Mammary epithelial cell (primary cell): ENCODE measurements at regions of chr12 and their contacts with region 1.

Region 1: DNA sequence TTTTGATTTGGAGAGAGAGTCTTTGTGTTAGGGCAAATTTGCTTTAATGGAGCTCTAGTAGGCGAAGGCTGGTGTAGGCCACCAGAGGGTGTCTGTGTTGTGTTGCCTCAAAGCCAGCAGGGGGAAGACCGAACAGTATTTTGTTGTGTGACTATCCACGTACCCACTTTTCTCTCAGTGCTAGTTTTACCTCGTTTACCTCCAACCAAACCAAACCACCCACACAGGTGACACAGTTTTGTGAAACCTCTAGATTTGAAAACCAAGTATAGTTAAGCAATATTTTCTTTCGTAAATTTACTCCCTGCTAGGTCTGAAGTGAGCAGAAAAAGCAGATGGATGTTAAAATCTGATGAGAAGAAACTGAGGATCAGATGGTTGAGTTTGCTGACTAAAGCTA is 36.3 kb upstream of the NPFF start:
- DNase-seq: peak; percentile 62
- H3K4me3 ChIP-seq: no peak overlapping the region
- H3K27ac ChIP-seq: no peak overlapping the region
- H3K4me1 ChIP-seq: peaks cover 2% of the 10 kb centered on the region
- H3K27me3 ChIP-seq: no peaks in the 10 kb centered on the region
- CTCF ChIP-seq: peak; percentile 80 to 87

Region 2: DNA sequence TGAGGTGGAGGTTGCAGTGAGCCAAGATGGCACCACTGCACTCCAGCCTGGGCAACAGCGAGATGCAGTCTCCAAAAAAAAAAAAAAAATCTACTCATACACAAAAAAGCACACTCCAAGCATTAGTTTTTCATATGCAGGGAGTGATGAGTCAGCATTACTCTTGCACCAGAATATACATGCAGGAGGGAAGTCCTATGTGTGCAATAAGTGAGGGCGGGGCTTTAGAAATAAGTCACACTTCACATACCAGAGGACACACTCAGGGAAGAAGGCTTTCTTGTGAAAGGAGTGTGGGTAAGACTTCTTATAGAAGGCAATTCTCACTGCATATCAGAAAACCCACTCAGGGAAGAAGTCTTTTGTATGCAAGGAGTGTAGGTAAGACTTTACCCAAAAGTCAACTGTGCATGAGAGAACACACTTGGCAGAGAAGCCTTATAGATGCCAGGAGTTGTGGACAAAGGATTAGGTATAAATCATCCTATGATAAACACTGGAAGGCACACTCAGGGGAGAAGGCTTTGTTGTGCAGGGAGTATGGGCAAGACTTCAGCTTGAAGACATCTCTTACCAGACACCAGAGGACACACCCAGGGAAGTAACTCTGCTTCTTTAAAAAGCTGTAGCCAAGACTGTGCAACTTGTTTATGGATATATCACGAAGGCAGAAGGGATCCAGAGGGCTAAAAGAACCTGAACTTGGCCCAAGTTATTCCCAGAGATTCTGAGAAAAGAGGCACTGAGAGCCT is 32.1 kb after region 1 on chr12:
- CTCF ChIA-PET with region 1: no interaction called
- dilution Hi-C with region 1: no loop called
- in situ Hi-C with region 1: no loop called
- intact Hi-C with region 1: loop called (anchors 5 kb)
- DNase-seq: peak; percentile 87
- H3K4me3 ChIP-seq: no peak overlapping the region
- H3K27ac ChIP-seq: no peak overlapping the region
- H3K4me1 ChIP-seq: peaks cover 9% of the 10 kb centered on the region
- H3K27me3 ChIP-seq: no peaks in the 10 kb centered on the region
- CTCF ChIP-seq: no peak

Region 3: GRCh38 chr12:53625946-53626701 is 82.6 kb after region 1 on chr12 and contains the start of gene ATF7:
- CTCF ChIA-PET with region 1: interaction called, 4 read pairs
- dilution Hi-C with region 1: no loop called
- in situ Hi-C with region 1: no loop called
- intact Hi-C with region 1: loop called (anchors 1 kb)
- DNase-seq: peak; percentile 95
- H3K4me3 ChIP-seq: peak within 1 kb of the TSS; percentile 77 to 86 (median 83)
- H3K27ac ChIP-seq: peak within 1 kb of the TSS; percentile 96
- H3K4me1 ChIP-seq: peaks cover 18% of the 10 kb centered on the region
- H3K27me3 ChIP-seq: no peaks in the 10 kb centered on the region
- CTCF ChIP-seq: no peak
- total RNA-seq, gene ATF7: 11.2 to 26.5 TPM

Region 4: GRCh38 chr12:53746592-53747092 is 203.1 kb after region 1 on chr12:
- CTCF ChIA-PET with region 1: no interaction called
- dilution Hi-C with region 1: no loop called
- in situ Hi-C with region 1: no loop called
- intact Hi-C with region 1: loop called (anchors 1 kb)
- DNase-seq: peak; percentile 72
- H3K4me3 ChIP-seq: no peak overlapping the region
- H3K27ac ChIP-seq: no peak overlapping the region
- H3K4me1 ChIP-seq: peaks cover 6% of the 10 kb centered on the region
- H3K27me3 ChIP-seq: peaks cover 10% of the 10 kb centered on the region
- CTCF ChIP-seq: peak; percentile 99 to 100